Activated B cell treated with CpG ODN at 0.5 μM for 24 hours (primary cell): ENCODE measurements at regions of chr9 and their contacts with region 1.

Region 1: DNA sequence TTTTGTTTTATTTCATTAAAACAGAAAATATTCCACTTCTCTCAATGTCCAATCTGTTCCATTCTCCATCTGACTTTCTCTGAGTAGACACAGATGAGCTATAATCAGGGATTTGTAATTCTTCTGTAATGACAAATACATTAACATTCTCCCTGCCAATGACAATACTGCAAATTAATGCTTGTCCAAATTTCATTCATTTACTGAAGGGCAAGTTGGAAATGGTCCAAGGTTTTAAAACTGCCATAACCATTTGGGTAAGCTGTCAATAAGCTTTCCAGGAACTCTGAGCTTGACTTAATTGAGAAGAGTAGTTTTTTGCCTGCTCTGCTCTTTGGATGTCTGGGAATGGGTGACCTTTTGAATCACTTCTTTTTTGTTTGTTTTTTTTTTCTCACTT is 253.5 kb downstream of the DMRTA1 start:
- DNase-seq: no peak
- ATAC-seq: no peak
- H3K4me3 Mint-ChIP-seq: no peak overlapping the region
- H3K27ac Mint-ChIP-seq: no peak overlapping the region
- H3K4me1 Mint-ChIP-seq: no peaks in the 10 kb centered on the region
- H3K27me3 Mint-ChIP-seq: no peaks in the 10 kb centered on the region
- CTCF ChIP-seq: no peak

Region 2: DNA sequence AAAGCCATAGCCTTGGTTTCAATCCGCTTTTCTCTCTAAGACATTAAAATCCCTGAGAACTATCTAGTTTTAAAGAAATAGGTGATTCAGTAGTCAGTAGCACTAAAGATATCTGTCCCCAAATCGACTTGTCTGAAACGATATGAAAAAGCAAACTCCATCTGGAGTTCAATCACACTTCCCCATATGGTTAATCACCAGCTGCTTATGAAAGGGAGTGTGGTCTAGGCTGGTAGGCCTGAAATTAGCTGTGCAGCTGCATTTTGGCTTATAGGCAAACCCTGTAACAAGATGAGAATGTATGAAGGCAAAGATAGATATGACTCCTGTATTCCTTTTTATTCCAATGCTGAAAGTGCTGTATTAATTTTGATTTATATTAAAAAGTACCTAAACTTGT is 187.7 kb before region 1 on chr9:
- CTCF ChIA-PET with region 1: no interaction called
- POLR2A ChIA-PET with region 1: no interaction called
- intact Hi-C with region 1: no loop called
- DNase-seq: no peak
- ATAC-seq: no peak
- H3K4me3 Mint-ChIP-seq: no peak overlapping the region
- H3K27ac Mint-ChIP-seq: no peak overlapping the region
- H3K4me1 Mint-ChIP-seq: peaks cover 2% of the 10 kb centered on the region
- H3K27me3 Mint-ChIP-seq: peaks cover 2% of the 10 kb centered on the region
- CTCF ChIP-seq: no peak

Region 3: GRCh38 chr9:22645893-22646292 is 54.3 kb before region 1 on chr9:
- CTCF ChIA-PET with region 1: no interaction called
- POLR2A ChIA-PET with region 1: no interaction called
- intact Hi-C with region 1: loop called (anchors 10 kb)
- DNase-seq: no peak
- ATAC-seq: no peak
- H3K4me3 Mint-ChIP-seq: no peak overlapping the region
- H3K27ac Mint-ChIP-seq: no peak overlapping the region
- H3K4me1 Mint-ChIP-seq: no peaks in the 10 kb centered on the region
- H3K27me3 Mint-ChIP-seq: no peaks in the 10 kb centered on the region
- CTCF ChIP-seq: no peak